Mammary epithelial cell (primary cell): ENCODE measurements at regions of chr19 and their contacts with region 1.

Region 1: GRCh38 chr19:5967994-5968430 is 9.9 kb downstream of the RANBP3 start:
- DNase-seq: peak; percentile 67
- H3K4me3 ChIP-seq: no peak overlapping the region
- H3K27ac ChIP-seq: peak overlapping the region; percentile 31
- H3K4me1 ChIP-seq: peaks cover 24% of the 10 kb centered on the region
- H3K27me3 ChIP-seq: no peaks in the 10 kb centered on the region
- CTCF ChIP-seq: peak; percentile 86 to 96

Region 2: GRCh38 chr19:5864725-5865486 is 103.1 kb before region 1 on chr19:
- CTCF ChIA-PET with region 1: no interaction called
- dilution Hi-C with region 1: loop called (anchors 5 kb)
- in situ Hi-C with region 1: no loop called
- intact Hi-C with region 1: no loop called
- DNase-seq: no peak
- H3K4me3 ChIP-seq: no peak overlapping the region
- H3K27ac ChIP-seq: no peak overlapping the region
- H3K4me1 ChIP-seq: no peaks in the 10 kb centered on the region
- H3K27me3 ChIP-seq: peaks cover 3% of the 10 kb centered on the region
- CTCF ChIP-seq: peak; percentile 28 to 29

Region 3: GRCh38 chr19:5904352-5905113 is 63.5 kb before region 1 on chr19 and contains the start of gene VMAC:
- CTCF ChIA-PET with region 1: interaction called, 5 read pairs
- dilution Hi-C with region 1: no loop called
- in situ Hi-C with region 1: no loop called
- intact Hi-C with region 1: loop called (anchors 5 kb)
- DNase-seq: peak; percentile 100
- H3K4me3 ChIP-seq: peak within 1 kb of the TSS; percentile 70 to 82 (median 78)
- H3K27ac ChIP-seq: peak within 1 kb of the TSS; percentile 90
- H3K4me1 ChIP-seq: peaks cover 4% of the 10 kb centered on the region
- H3K27me3 ChIP-seq: no peaks in the 10 kb centered on the region
- CTCF ChIP-seq: no peak
- total RNA-seq, gene VMAC: 3.4 to 7.3 TPM

Region 4: GRCh38 chr19:5934774-5935472 is 33.1 kb before region 1 on chr19:
- CTCF ChIA-PET with region 1: no interaction called
- dilution Hi-C with region 1: loop called (anchors 5 kb)
- in situ Hi-C with region 1: no loop called
- intact Hi-C with region 1: no loop called
- DNase-seq: no peak
- H3K4me3 ChIP-seq: no peak overlapping the region
- H3K27ac ChIP-seq: no peak overlapping the region
- H3K4me1 ChIP-seq: no peaks in the 10 kb centered on the region
- H3K27me3 ChIP-seq: no peaks in the 10 kb centered on the region
- CTCF ChIP-seq: no peak

Region 5: GRCh38 chr19:6021878-6022569 is 54.0 kb after region 1 on chr19:
- CTCF ChIA-PET with region 1: no interaction called
- dilution Hi-C with region 1: no loop called
- in situ Hi-C with region 1: no loop called
- intact Hi-C with region 1: loop called (anchors 1 kb)
- DNase-seq: peak; percentile 12
- H3K4me3 ChIP-seq: no peak overlapping the region
- H3K27ac ChIP-seq: no peak overlapping the region
- H3K4me1 ChIP-seq: no peaks in the 10 kb centered on the region
- H3K27me3 ChIP-seq: no peaks in the 10 kb centered on the region
- CTCF ChIP-seq: peak; percentile 51 to 74

Region 6: GRCh38 chr19:6412447-6413091 is 444.6 kb after region 1 on chr19:
- CTCF ChIA-PET with region 1: no interaction called
- dilution Hi-C with region 1: loop called (anchors 10 kb)
- in situ Hi-C with region 1: no loop called
- intact Hi-C with region 1: no loop called
- DNase-seq: no peak
- H3K4me3 ChIP-seq: no peak overlapping the region
- H3K27ac ChIP-seq: no peak overlapping the region
- H3K4me1 ChIP-seq: no peaks in the 10 kb centered on the region
- H3K27me3 ChIP-seq: no peaks in the 10 kb centered on the region
- CTCF ChIP-seq: peak; percentile 60 to 63